Adrenal gland (tissue), 19 donors: ENCODE measurements at regions of chr7 and their contacts with region 1.

Region 1: GRCh38 chr7:32957326-32958045 is at the start of gene FKBP9:
- DNase-seq: peak; percentile 77 to 93 (median 80)
- H3K4me3 ChIP-seq: peak within 1 kb of the TSS; percentile 10 to 58 (median 40)
- H3K27ac ChIP-seq: peak within 1 kb of the TSS; percentile 1 to 90 (median 80)
- H3K4me1 ChIP-seq: peaks cover 8 to 10% of the 10 kb centered on the region in 2 donors
- H3K27me3 ChIP-seq: no peaks in the 10 kb centered on the region
- CTCF ChIP-seq: no peak
- POLR2A ChIP-seq: peak; percentile 66 to 82
- total RNA-seq, gene FKBP9: 66.7 to 299 (median 164) TPM

Region 2: DNA sequence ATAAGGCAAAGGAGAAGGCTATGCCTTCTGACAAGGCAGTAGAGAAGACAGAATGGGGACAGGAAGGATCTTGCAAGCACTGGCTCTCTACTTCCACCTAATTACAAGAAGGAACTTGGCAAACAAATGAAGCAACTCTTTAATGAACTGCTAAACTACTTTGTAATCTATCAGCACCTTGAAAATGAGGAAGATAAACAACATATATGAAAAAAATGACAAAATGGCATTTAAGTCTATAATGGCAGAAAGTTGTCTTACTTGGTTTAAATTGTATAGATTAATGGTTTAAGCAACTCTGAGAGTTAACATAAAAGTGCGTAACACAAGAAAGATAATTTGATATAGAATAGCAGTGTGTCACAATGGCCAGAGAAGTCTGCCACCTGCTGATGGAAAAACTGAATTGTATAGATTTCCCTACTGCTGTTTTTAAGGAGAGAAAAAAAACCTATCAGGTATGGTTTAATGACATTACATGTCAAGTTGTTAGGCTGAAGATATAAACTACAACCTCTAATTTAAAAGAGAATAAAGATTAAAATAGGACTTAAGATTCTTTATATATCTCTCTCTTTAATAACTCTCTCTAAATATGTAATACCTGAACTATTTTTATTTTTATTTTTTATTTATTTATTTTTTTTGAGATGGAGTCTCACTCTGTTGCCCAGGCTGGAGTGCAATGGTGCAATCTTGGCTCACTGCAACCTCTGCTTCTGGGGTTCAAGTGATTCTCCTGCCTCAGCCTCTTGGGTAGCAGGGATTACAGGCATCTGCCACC is 93.2 kb after region 1 on chr7:
- intact Hi-C with region 1: loop called in 1 of 2 experiments (anchors 10 kb)
- DNase-seq: peak in 3 of 7 donors; percentile 17 to 34 (median 34)
- H3K4me3 ChIP-seq: peak overlapping the region in 1 of 4 donors; percentile 2
- H3K27ac ChIP-seq: peak overlapping the region in 4 of 5 donors; percentile 34 to 61 (median 54)
- H3K4me1 ChIP-seq: peaks cover 0 to 20% of the 10 kb centered on the region in 2 donors
- H3K27me3 ChIP-seq: no peaks in the 10 kb centered on the region
- CTCF ChIP-seq: peak; percentile 54 to 76 (median 64)
- POLR2A ChIP-seq: no peak